ENCODE measurements at regions of chr11 and their contacts with region 1.

Region 1: GRCh38 chr11:47176328-47177228 is at the start of gene ARFGAP2:
- DNase-seq: peak; percentile 93 to 98 (median 96)
- ATAC-seq: peak; percentile 91
- H3K4me3 ChIP-seq: peak within 1 kb of the TSS; percentile 97 to 100
- H3K4me3 Mint-ChIP-seq: peak within 1 kb of the TSS; percentile 94
- H3K27ac ChIP-seq: peak within 1 kb of the TSS; percentile 95 to 98
- H3K27ac Mint-ChIP-seq: peak within 1 kb of the TSS; percentile 98
- H3K4me1 ChIP-seq: peaks cover 28% of the 10 kb centered on the region
- H3K4me1 Mint-ChIP-seq: peaks cover 41% of the 10 kb centered on the region
- H3K27me3 ChIP-seq: no peaks in the 10 kb centered on the region
- H3K27me3 Mint-ChIP-seq: no peaks in the 10 kb centered on the region
- CTCF ChIP-seq: no peak
- total RNA-seq, gene ARFGAP2: 194 to 215 TPM

Region 2: GRCh38 chr11:46121724-46122477 is 1054.7 kb before region 1 on chr11:
- CTCF ChIA-PET with region 1: no interaction called
- POLR2A ChIA-PET with region 1: no interaction called
- intact Hi-C with region 1: loop called in 1 of 2 experiments (anchors 10 kb)
- DNase-seq: peak; percentile 50 to 92 (median 73)
- ATAC-seq: peak; percentile 54
- H3K4me3 ChIP-seq: peak overlapping the region; percentile 58 to 63
- H3K4me3 Mint-ChIP-seq: peak overlapping the region; percentile 88
- H3K27ac ChIP-seq: peak overlapping the region; percentile 1 to 26
- H3K27ac Mint-ChIP-seq: peak overlapping the region; percentile 96
- H3K4me1 ChIP-seq: peaks cover 30% of the 10 kb centered on the region
- H3K4me1 Mint-ChIP-seq: peaks cover 33% of the 10 kb centered on the region
- H3K27me3 ChIP-seq: no peaks in the 10 kb centered on the region
- H3K27me3 Mint-ChIP-seq: no peaks in the 10 kb centered on the region
- CTCF ChIP-seq: no peak

Region 3: DNA sequence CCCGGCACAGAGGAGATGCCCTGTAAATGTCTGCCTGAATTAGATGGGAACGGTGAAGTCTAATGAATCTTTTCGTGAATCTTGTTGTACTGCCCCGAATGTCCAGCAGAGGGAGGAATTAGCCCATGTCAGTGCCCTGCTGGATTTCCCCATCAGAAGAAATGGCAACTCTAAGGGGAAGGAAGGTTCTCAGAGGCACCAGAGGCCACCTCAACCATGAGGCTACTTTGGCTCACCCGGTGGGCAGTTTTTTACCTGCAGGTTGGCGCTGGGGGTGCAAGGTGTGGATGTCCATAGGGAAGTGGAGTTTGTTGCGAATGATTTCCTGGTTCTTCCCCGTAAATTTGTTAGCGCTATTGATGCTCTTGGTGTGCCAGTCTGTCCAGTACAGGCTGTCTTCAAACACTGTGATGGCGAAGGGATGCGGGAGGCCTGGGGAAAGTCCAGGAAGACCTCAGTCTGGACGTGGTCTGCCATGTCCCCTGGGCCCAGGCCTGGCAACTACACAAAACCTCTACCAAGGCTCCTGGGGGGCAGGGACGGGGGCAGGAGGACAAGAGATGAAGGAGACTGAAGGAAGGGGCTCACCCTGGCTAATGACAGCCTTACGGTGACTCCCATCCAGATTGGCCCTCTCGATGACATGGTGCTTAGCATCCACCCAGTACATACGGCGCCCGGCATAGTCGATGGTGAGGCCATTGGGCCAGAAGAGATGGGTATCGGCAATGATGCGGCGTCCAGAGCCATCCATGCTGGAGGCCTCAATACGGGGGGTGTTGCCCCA is 286.7 kb before region 1 on chr11:
- CTCF ChIA-PET with region 1: interaction called, 4 read pairs
- POLR2A ChIA-PET with region 1: no interaction called
- intact Hi-C with region 1: loop called in 1 of 2 experiments (anchors 1 kb)
- DNase-seq: peak; percentile 51 to 84 (median 78)
- ATAC-seq: peak; percentile 97
- H3K4me3 ChIP-seq: no peak overlapping the region
- H3K4me3 Mint-ChIP-seq: no peak overlapping the region
- H3K27ac ChIP-seq: no peak overlapping the region
- H3K27ac Mint-ChIP-seq: peak overlapping the region; percentile 60
- H3K4me1 ChIP-seq: no peaks in the 10 kb centered on the region
- H3K4me1 Mint-ChIP-seq: peaks cover 3% of the 10 kb centered on the region
- H3K27me3 ChIP-seq: no peaks in the 10 kb centered on the region
- H3K27me3 Mint-ChIP-seq: no peaks in the 10 kb centered on the region
- CTCF ChIP-seq: peak; percentile 80

Region 4: GRCh38 chr11:46972343-46972742 is 204.2 kb before region 1 on chr11:
- CTCF ChIA-PET with region 1: no interaction called
- POLR2A ChIA-PET with region 1: no interaction called
- intact Hi-C with region 1: no loop called
- DNase-seq: no peak
- ATAC-seq: no peak
- H3K4me3 ChIP-seq: no peak overlapping the region
- H3K4me3 Mint-ChIP-seq: no peak overlapping the region
- H3K27ac ChIP-seq: no peak overlapping the region
- H3K27ac Mint-ChIP-seq: no peak overlapping the region
- H3K4me1 ChIP-seq: no peaks in the 10 kb centered on the region
- H3K4me1 Mint-ChIP-seq: no peaks in the 10 kb centered on the region
- H3K27me3 ChIP-seq: no peaks in the 10 kb centered on the region
- H3K27me3 Mint-ChIP-seq: no peaks in the 10 kb centered on the region
- CTCF ChIP-seq: no peak

Region 5: GRCh38 chr11:47161134-47161854 is 15.3 kb before region 1 on chr11:
- CTCF ChIA-PET with region 1: interaction called, 8 read pairs
- POLR2A ChIA-PET with region 1: no interaction called
- intact Hi-C with region 1: loop called in 1 of 2 experiments (anchors 2 kb)
- DNase-seq: peak; percentile 41 to 78 (median 64)
- ATAC-seq: peak; percentile 82
- H3K4me3 ChIP-seq: no peak overlapping the region
- H3K4me3 Mint-ChIP-seq: no peak overlapping the region
- H3K27ac ChIP-seq: no peak overlapping the region
- H3K27ac Mint-ChIP-seq: no peak overlapping the region
- H3K4me1 ChIP-seq: peaks cover 3% of the 10 kb centered on the region
- H3K4me1 Mint-ChIP-seq: peaks cover 4% of the 10 kb centered on the region
- H3K27me3 ChIP-seq: no peaks in the 10 kb centered on the region
- H3K27me3 Mint-ChIP-seq: no peaks in the 10 kb centered on the region
- CTCF ChIP-seq: peak; percentile 58

Region 6: GRCh38 chr11:47259178-47259977 is 82.8 kb after region 1 on chr11:
- CTCF ChIA-PET with region 1: interaction called, 15 read pairs
- POLR2A ChIA-PET with region 1: no interaction called
- intact Hi-C with region 1: loop called (anchors 2 kb)
- DNase-seq: peak in 4 of 9 experiments; percentile 39 to 61 (median 48)
- ATAC-seq: peak; percentile 90
- H3K4me3 ChIP-seq: no peak overlapping the region
- H3K4me3 Mint-ChIP-seq: no peak overlapping the region
- H3K27ac ChIP-seq: no peak overlapping the region
- H3K27ac Mint-ChIP-seq: no peak overlapping the region
- H3K4me1 ChIP-seq: peaks cover 10% of the 10 kb centered on the region
- H3K4me1 Mint-ChIP-seq: peaks cover 10% of the 10 kb centered on the region
- H3K27me3 ChIP-seq: no peaks in the 10 kb centered on the region
- H3K27me3 Mint-ChIP-seq: no peaks in the 10 kb centered on the region
- CTCF ChIP-seq: peak; percentile 23

Region 7: DNA sequence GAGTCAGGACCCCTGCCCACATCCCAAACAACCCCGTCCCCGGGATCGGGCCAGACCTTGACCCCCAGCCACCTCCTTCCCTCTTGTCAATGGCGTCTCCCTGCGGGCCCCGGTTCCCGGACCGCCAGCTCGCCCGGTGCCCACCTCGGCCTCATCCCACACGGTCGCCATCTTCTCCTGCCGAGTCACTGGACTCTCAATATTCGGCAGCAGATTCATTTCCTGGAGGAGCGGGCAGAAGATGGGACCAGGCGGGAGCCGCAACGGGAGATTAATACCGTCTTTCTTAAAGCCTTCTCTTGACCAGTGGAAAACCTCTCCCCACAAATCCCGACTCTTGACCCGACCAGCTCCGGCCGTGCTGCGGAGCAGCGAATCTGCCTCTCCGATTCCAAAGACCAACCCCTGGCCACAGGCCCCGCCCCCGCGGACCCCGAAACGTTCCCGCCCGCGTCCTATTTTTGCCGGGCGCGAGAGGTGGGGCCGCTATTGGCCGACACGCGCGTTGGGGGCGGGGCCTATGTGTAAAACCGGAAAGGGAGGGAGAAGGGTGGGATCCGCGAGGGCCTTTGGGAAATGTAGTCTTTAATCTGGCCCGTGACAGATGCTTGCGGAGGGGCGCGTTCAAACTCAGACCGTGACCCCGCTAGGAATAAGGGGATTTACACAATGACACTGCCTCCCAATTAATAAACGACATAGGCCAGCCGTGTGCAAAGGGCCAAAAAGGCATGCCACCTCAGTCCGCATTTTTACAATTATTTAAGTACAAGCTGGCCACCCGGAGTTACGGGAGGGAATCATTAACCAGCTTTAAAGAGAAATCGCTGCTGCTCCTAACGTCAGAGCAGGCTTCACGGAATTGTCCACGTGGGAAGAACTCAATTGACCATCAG is 249.7 kb after region 1 on chr11 and contains the start of gene PSMC3:
- CTCF ChIA-PET with region 1: no interaction called
- POLR2A ChIA-PET with region 1: no interaction called
- intact Hi-C with region 1: loop called (anchors 1 kb)
- DNase-seq: peak; percentile 96 to 99 (median 98)
- ATAC-seq: peak; percentile 98
- H3K4me3 ChIP-seq: peak within 1 kb of the TSS; percentile 68 to 98
- H3K4me3 Mint-ChIP-seq: peak within 1 kb of the TSS; percentile 100
- H3K27ac ChIP-seq: peak within 1 kb of the TSS; percentile 77 to 81
- H3K27ac Mint-ChIP-seq: peak within 1 kb of the TSS; percentile 98
- H3K4me1 ChIP-seq: peaks cover 14% of the 10 kb centered on the region
- H3K4me1 Mint-ChIP-seq: peaks cover 28% of the 10 kb centered on the region
- H3K27me3 ChIP-seq: no peaks in the 10 kb centered on the region
- H3K27me3 Mint-ChIP-seq: no peaks in the 10 kb centered on the region
- CTCF ChIP-seq: no peak
- total RNA-seq, gene PSMC3: 58.1 to 63.4 TPM

Region 8: DNA sequence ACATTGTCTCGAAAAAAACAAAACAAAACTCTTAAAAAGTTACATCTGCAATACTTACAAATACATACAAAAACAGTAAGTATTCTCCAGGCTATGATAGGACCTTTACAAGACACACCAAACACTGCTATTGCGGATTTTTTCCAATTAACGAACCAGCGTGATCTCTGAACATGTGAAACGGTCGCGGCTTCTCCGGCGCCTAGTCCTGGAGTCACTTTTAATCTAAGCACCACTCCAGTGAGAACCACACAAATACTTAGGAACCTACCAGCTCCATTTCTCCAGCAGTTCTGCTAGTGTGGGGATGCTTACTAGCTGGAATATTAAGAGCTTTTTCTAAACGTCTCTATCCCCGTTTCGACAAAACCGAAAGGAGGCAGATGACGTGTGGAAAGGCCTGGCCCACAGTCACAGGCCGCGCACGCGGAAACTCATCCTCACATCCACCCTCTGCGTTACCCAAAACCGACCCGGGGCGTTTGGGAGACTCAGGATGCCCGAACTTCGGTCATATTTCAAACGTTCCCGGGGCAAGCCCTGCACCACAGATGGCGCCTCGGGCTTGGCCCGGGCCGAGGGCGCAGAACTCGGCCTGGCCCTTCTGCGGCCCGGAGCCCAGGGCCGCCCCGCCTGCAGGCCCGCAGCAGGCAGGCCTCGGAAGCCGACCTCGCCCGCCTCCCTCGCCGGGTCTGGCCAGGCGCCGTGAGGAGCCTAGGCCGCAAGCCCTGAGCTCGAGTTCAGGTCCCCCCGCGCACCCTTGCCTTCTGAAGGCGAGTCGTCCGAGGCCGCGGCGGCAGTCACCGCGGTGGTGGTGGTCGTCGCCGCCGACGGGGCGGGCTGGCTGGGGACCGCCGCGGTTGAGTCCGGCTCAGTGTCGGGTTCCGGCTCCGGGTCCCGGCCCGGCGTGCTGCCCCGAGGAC is 590.0 kb after region 1 on chr11:
- CTCF ChIA-PET with region 1: no interaction called
- POLR2A ChIA-PET with region 1: no interaction called
- intact Hi-C with region 1: loop called in 1 of 2 experiments (anchors 2 kb)
- DNase-seq: peak; percentile 48 to 90 (median 74)
- ATAC-seq: peak; percentile 33
- H3K4me3 ChIP-seq: peak overlapping the region; percentile 75 to 79
- H3K4me3 Mint-ChIP-seq: peak overlapping the region; percentile 94
- H3K27ac ChIP-seq: peak overlapping the region; percentile 91 to 97
- H3K27ac Mint-ChIP-seq: peak overlapping the region; percentile 100
- H3K4me1 ChIP-seq: peaks cover 29% of the 10 kb centered on the region
- H3K4me1 Mint-ChIP-seq: peaks cover 31% of the 10 kb centered on the region
- H3K27me3 ChIP-seq: no peaks in the 10 kb centered on the region
- H3K27me3 Mint-ChIP-seq: no peaks in the 10 kb centered on the region
- CTCF ChIP-seq: no peak